Lower leg skin (tissue), 4 donors: ENCODE measurements at regions of chr10 and their contacts with region 1.

Region 1: GRCh38 chr10:116287906-116288501 is 15.0 kb upstream of the GFRA1 start:
- DNase-seq: no peak
- H3K4me3 ChIP-seq: no peak overlapping the region
- CTCF ChIP-seq: no peak
- POLR2A ChIP-seq: no peak

Region 2: GRCh38 chr10:115795964-115796363 is 492.0 kb before region 1 on chr10:
- intact Hi-C with region 1: loop called (anchors 5 kb)
- DNase-seq: no peak
- H3K4me3 ChIP-seq: no peak overlapping the region
- CTCF ChIP-seq: no peak
- POLR2A ChIP-seq: no peak

Region 3: DNA sequence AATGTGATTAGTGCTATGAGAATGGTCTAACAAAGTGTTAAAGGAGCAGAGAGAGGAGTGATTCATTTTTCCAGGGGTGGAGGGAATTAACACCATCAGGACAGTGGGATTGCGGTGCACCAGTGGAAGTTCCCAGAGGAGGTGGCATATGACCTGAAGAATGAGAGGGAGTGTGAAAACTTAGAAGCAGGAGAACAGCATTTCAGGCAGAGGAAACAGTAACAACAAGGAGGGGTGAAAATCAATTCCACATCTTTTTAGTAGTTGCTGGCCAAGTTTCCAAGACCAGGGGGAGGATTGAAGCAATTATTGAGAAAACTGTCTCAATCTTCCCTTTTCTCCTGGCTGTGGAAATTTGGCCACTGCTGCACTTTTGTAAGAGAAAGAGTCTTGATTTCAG is 12.5 kb after region 1 on chr10:
- intact Hi-C with region 1: no loop called
- DNase-seq: peak in 1 of 2 donors; percentile 52
- H3K4me3 ChIP-seq: no peak overlapping the region
- CTCF ChIP-seq: no peak
- POLR2A ChIP-seq: no peak